ENCODE measurements at regions of chr13 and their contacts with region 1.

Region 1: DNA sequence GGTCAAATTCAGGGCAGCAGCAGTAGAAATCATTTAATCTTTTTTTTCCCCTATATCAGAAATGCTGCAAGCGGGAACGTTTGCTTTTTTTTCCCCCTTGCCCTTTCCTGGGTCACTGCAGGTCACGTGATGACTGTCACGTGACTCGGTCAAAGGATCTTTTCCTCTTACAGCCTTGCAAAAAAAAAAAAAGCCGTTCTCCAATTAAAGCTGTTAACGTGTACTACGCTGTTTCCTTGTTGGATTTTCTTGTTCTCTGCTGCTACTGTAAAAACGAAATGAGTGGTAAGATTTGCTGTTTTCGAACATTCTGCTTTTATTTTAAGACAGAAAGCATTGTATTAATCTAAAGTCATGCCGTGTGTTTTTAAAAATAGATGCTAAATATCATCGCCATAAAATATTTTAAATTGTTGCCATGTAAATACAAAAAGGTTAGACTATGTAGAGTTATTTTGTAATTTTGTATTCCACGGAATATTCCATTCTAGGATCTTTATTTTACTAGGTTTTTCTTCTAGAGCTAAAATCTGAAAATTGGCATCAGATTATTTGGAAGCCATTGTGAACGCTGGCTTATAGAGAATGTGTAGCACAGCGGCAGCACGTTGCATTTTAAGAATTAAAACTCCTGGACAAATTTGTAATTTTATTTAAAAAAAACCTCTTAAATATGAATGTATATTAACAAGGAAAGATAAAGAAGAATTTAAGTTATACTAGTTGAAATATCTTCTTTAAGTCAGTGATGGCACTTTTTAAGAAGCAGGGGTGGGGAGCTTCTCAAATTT is 109.8 kb upstream of the MLNR start:
- DNase-seq: peak; percentile 66
- ATAC-seq: peak; percentile 83
- H3K4me3 ChIP-seq: peak overlapping the region; percentile 57
- H3K27ac ChIP-seq: peak overlapping the region; percentile 61
- H3K4me1 ChIP-seq: no peaks in the 10 kb centered on the region
- H3K27me3 ChIP-seq: no peaks in the 10 kb centered on the region
- CTCF ChIP-seq: no peak
- EP300 ChIP-seq: no peak
- POLR2A ChIP-seq: no peak
- RAD21 ChIP-seq: no peak

Region 2: DNA sequence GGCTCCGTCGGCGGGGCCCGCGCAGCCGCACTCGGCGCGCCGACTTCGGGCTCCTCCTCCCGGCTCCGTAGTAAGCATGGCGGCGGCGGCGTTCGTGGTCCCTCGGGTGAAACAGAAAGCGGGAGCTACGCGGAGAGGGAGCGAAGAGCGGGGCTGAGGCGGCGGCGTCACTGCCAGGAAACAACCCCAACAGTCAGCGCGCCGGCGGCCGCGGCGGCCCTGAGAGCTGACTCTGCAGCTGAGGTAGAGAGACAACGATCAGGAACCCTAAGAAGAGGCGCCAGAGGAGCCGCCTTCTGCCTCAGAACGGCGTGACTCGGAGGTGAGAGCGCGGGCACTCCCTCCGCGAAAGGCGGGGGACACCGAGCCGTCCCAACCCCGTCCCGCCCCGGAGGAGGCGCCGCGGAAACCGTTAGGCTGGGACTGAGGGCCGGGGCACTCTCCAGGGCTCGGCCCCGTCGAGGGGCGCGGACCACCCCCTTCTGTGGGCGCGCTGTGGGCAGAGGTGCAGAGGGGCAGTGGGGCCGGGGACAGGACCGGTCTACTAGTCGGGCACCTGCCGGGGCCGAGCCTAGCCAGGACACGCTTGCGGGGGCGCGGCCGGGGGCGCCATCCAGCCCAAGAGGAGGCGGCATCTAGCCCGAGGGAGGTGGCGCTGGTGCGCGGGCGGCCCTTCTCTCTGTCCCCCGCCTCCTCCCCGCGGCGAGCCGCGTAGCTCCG is 134.3 kb before region 1 on chr13 and contains the start of gene FNDC3A:
- CTCF ChIA-PET with region 1: interaction called, 3 read pairs
- POLR2A ChIA-PET with region 1: interaction called, 5 read pairs
- RAD21 ChIA-PET with region 1: interaction called, 7 read pairs
- SMC1A ChIA-PET with region 1: interaction called, 30 read pairs
- in situ Hi-C with region 1: no loop called
- intact Hi-C with region 1: loop called (anchors 5 kb)
- DNase-seq: no peak
- ATAC-seq: peak; percentile 82
- H3K4me3 ChIP-seq: peak within 1 kb of the TSS; percentile 80
- H3K27ac ChIP-seq: peak within 1 kb of the TSS; percentile 96
- H3K4me1 ChIP-seq: peaks cover 3% of the 10 kb centered on the region; the same call in 1 of the 2 replicates
- H3K27me3 ChIP-seq: no peaks in the 10 kb centered on the region
- CTCF ChIP-seq: peak in 1 of 3 experiments; percentile 14; a peak in 2 of 6 replicates
- EP300 ChIP-seq: no peak
- POLR2A ChIP-seq: peak; percentile 91
- RAD21 ChIP-seq: no peak
- polyA plus RNA-seq, gene FNDC3A: 6.3 to 8.4 TPM

Region 3: DNA sequence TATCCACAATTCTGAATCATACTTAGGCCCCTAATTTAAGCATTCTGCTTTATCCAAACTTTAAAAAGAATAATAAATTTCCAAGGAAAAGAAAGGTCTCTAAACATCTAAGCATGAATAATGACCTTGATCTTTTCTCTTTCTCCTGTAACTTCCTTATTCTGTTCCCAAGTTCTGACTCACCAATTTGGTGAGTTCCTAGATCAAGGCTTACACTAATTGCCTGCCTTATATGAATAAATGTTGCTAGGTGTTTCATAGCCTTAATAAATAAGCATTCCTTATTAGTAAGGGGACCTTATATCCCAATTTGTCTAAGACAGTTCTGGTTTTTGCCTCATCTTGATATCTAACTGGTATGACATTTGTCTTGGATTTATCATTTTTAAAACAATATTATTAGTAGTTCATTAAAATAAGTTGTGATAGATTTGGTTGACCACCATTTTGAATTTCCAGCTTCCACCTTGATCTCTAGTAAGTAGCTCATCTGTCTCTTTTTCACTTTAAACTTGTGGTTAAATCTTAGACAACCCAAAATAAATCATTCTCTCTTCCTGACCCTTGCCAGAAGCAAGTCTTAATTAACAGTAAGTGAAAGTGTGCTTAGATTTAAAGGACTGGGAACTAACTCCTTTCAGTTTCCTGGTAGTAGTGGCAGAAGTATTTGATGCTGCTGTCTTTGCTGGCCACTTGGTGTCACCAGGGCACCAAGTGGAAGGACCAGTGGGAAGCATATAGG is 11.4 kb before region 1 on chr13:
- CTCF ChIA-PET with region 1: interaction called, 12 read pairs
- POLR2A ChIA-PET with region 1: no interaction called
- RAD21 ChIA-PET with region 1: interaction called, 5 read pairs
- SMC1A ChIA-PET with region 1: interaction called, 19 read pairs
- in situ Hi-C with region 1: no loop called
- intact Hi-C with region 1: no loop called
- DNase-seq: no peak
- ATAC-seq: peak; percentile 87
- H3K4me3 ChIP-seq: no peak overlapping the region
- H3K27ac ChIP-seq: peak overlapping the region; percentile 11; the same call in 1 of the 2 replicates
- H3K4me1 ChIP-seq: peaks cover 20% of the 10 kb centered on the region
- H3K27me3 ChIP-seq: no peaks in the 10 kb centered on the region
- CTCF ChIP-seq: peak; percentile 35 to 56 (median 46); a peak in 5 of 6 replicates
- EP300 ChIP-seq: no peak
- POLR2A ChIP-seq: no peak
- RAD21 ChIP-seq: peak; percentile 63

Region 4: GRCh38 chr13:49124693-49125304 is 14.5 kb after region 1 on chr13:
- CTCF ChIA-PET with region 1: interaction called, 3 read pairs
- POLR2A ChIA-PET with region 1: interaction called, 3 read pairs
- RAD21 ChIA-PET with region 1: interaction called, 3 read pairs
- SMC1A ChIA-PET with region 1: interaction called, 11 read pairs
- in situ Hi-C with region 1: no loop called
- intact Hi-C with region 1: no loop called
- DNase-seq: no peak
- ATAC-seq: no peak
- H3K4me3 ChIP-seq: no peak overlapping the region
- H3K27ac ChIP-seq: no peak overlapping the region
- H3K4me1 ChIP-seq: no peaks in the 10 kb centered on the region
- H3K27me3 ChIP-seq: no peaks in the 10 kb centered on the region
- CTCF ChIP-seq: no peak
- EP300 ChIP-seq: no peak
- POLR2A ChIP-seq: no peak
- RAD21 ChIP-seq: no peak

Measured in GM12878 (cell line).